ENCODE measurements at regions of chr16 and their contacts with region 1.

Region 1: DNA sequence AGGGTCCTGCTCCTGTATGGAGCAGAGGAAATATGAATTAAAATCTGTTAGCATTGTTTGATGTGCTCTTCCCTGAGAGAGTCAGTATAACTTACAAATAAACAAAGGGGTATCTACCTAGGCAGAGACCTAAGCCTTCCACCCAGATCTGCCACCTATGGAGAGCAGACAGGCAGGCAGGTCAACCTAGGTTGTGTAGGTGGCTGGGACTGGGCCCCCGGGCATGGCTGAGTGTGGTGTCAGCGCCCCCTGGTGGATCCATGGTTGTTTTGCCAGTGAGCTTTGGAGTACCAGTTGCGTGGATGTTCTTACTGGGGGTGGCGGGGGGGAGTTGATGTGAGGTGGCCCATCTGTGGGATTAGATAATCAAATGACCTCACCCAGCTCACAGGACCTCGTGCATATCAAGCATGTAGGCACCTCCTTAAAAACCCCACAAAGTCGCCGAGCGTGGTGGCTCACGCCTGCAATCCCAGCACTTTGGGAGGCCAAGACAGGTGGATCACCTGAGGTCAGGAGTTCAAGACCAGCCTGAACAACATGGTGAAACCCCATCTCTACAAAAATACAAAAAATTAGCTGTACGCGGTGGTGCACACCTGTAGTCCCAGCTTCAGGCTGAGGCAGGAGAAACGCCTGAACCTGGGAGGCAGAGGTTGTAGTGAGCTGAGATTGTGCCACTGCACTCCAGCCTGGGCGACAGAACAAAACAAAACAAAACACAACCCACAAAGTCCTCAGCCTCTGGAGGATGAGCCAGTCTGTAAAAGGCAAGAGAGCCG is 17.6 kb downstream of the DUS2 start:
- DNase-seq: no peak
- H3K4me3 ChIP-seq: no peak overlapping the region
- H3K27me3 ChIP-seq: no peaks in the 10 kb centered on the region
- CTCF ChIP-seq: peak; percentile 85

Region 2: DNA sequence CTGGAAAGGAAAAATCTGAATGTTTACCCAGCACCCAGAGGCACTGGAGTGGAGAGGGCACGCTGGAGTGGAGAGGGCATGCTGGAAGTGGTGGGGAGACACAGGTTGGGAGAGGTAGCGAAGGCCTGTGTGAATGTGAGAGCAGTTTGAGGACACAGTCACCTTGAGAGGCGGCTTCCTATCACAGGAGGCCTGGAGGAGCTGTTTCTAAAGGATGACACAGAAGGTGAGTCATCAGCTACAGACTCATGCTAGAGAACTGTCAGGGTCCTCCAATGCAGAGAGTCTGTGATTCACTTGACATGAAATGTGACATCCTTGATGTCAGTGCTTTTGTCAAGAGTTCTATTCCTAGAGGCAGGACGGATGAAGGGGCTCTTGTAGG is 122.9 kb before region 1 on chr16:
- CTCF ChIA-PET with region 1: no interaction called
- POLR2A ChIA-PET with region 1: no interaction called
- DNase-seq: no peak
- H3K4me3 ChIP-seq: no peak overlapping the region
- H3K27me3 ChIP-seq: no peaks in the 10 kb centered on the region
- CTCF ChIP-seq: no peak

Region 3: GRCh38 chr16:67968400-67969253 is 72.1 kb before region 1 on chr16 and contains the start of gene SLC12A4:
- CTCF ChIA-PET with region 1: interaction called, 15 read pairs
- POLR2A ChIA-PET with region 1: no interaction called
- DNase-seq: peak; percentile 18
- H3K4me3 ChIP-seq: peak within 1 kb of the TSS; percentile 80
- H3K27me3 ChIP-seq: no peaks in the 10 kb centered on the region
- CTCF ChIP-seq: peak; percentile 10; the same call in 1 of the 2 replicates
- polyA plus RNA-seq, gene SLC12A4: 64.4 and 115 TPM in 2 replicates

Region 4: GRCh38 chr16:68022704-68023522 is 17.8 kb before region 1 on chr16 and contains the starts of genes DDX28 and DUS2:
- CTCF ChIA-PET with region 1: interaction called, 29 read pairs
- POLR2A ChIA-PET with region 1: interaction called, 3 read pairs
- DNase-seq: peak; percentile 31
- H3K4me3 ChIP-seq: peak within 1 kb of the TSS; percentile 70
- H3K27me3 ChIP-seq: no peaks in the 10 kb centered on the region
- CTCF ChIP-seq: no peak
- polyA plus RNA-seq, gene DDX28: 8.1 and 10.1 TPM in 2 replicates
- polyA plus RNA-seq, gene DUS2: 12.9 and 18.3 TPM in 2 replicates

Region 5: GRCh38 chr16:68055395-68055794 is 14.7 kb after region 1 on chr16:
- CTCF ChIA-PET with region 1: interaction called, 12 read pairs
- POLR2A ChIA-PET with region 1: no interaction called
- DNase-seq: no peak
- H3K4me3 ChIP-seq: no peak overlapping the region
- H3K27me3 ChIP-seq: no peaks in the 10 kb centered on the region
- CTCF ChIP-seq: no peak

Region 6: DNA sequence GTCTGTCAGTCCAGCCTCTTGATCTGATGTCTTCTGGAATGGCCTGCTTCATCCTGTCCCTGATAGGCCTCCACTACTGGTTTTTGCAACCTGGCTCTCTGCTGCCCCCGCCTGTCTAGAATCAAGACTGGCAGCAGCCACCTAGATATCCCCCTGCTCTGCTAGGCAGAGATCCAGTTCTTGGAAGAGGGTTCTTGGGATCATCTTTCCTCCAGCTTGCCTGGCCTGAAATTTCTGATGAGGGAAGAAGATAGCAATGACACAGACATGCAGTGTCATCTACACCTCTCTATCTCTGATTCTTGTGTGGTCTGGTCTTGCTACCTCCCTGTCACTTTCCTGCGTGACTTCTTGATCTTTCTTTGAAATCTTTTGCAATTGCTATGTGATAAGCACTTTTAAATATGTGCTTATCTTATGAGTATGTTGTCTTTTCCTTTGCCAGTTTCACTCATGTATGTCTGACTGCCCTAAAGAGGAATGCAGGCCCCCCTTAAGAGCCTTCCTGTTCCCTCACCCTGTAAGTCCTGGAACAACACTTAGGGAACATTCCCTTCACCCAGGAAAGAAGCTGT is 24.2 kb after region 1 on chr16:
- CTCF ChIA-PET with region 1: interaction called, 10 read pairs
- POLR2A ChIA-PET with region 1: no interaction called
- DNase-seq: no peak
- H3K4me3 ChIP-seq: no peak overlapping the region
- H3K27me3 ChIP-seq: no peaks in the 10 kb centered on the region
- CTCF ChIP-seq: peak; percentile 92

Measured in BJ (cell line).